Lower leg skin (tissue), 4 donors: ENCODE measurements at regions of chr4 and their contacts with region 1.

Region 1: DNA sequence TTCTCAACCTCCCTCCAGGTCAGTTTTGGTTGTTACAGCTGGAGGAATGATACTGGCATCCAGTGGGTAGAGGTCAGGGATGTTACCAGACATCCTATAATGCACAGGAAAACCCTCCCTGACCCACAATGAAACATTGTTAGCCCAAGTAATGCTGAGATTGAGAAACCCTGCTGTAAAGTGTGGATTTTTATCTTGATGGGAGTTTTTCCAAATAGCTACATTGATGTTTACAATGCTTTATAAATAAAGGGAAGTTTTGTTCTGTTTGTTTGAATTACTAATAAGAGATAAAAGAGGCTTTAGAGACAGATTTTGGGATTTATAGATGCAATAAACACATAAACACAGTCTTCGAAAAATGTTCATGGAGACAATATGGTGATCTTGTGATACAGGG is 194.0 kb upstream of the NUDT6 start:
- DNase-seq: no peak
- H3K4me3 ChIP-seq: no peak overlapping the region
- CTCF ChIP-seq: no peak
- POLR2A ChIP-seq: no peak

Region 2: GRCh38 chr4:123064390-123064789 is 52.0 kb before region 1 on chr4:
- intact Hi-C with region 1: no loop called
- DNase-seq: no peak
- H3K4me3 ChIP-seq: no peak overlapping the region
- CTCF ChIP-seq: no peak
- POLR2A ChIP-seq: no peak

Region 3: DNA sequence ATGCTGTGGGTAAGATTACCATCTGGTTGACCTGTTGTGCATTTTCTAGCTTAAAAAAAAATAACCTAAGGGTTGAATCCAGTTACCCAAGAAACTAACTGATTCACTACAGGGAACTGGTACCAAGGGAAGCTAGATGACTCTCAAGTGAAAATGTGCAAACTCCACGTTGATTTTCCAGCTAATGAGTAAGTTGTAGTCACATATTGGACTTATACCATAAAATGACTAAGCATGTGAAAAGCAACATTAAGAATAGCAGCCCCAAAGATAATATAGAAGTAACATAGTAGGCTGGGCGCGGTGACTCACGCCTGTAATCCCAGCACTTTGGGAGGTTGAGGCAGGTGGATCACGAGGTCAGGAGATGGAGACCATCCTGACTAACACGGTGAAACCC is 551.1 kb after region 1 on chr4:
- intact Hi-C with region 1: loop called (anchors 5 kb)
- DNase-seq: no peak
- H3K4me3 ChIP-seq: no peak overlapping the region
- CTCF ChIP-seq: no peak
- POLR2A ChIP-seq: no peak